ENCODE measurements at regions of chr12 and their contacts with region 1.

Region 1: GRCh38 chr12:116955382-116956021 is 44.8 kb downstream of the FBXW8 start:
- DNase-seq: no peak
- ATAC-seq: peak; percentile 37; the same call in 1 of the 3 replicates
- H3K4me3 ChIP-seq: no peak overlapping the region
- H3K27ac ChIP-seq: no peak overlapping the region
- H3K4me1 ChIP-seq: peaks cover 11% of the 10 kb centered on the region
- H3K27me3 ChIP-seq: no peaks in the 10 kb centered on the region
- CTCF ChIP-seq: peak; percentile 7 to 19 (median 17); a peak in 3 of 6 replicates
- EP300 ChIP-seq: no peak
- POLR2A ChIP-seq: no peak
- RAD21 ChIP-seq: peak; percentile 44; the same call in 1 of the 2 replicates

Region 2: DNA sequence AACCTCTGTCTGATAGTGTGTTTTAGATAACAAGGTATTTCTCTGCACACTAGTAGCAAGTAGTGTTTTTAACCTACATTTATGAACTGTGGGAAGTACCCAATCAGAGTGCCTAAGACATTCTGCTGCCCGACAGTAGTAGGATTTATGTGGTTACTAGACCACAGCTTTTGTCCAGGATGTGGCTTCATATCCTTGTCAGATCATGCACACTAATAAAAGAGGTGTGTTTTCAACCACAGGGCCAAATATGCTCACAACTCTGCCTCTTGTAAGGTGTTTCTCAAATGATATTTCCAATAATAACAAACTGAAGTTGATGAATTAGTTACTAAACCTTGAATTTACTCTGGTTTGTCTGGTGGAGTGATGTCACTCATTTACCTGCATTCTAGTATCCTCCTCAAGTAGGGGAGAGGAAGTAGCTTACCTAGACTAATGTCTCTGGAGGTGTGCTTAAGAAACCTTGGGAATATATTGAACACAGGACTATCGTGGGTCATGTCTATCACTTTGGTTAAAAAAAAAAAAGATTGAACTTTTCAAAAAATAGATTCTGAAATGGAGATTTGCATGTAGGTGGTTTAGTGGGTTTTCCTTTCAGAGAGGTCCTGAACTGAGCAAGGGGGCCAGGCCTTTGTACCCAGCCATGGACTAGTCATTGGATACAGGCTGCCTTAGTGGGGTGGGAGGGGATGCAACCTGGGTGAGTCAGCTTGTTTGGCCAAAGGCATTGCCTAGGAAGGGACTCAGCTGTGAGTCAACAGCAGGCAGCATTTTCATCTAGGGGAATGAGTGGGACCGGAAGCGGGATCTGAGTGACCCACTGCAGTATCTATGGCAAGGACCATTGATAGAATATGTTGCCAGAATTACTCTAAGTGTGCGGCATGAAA is 30.7 kb before region 1 on chr12:
- CTCF ChIA-PET with region 1: no interaction called
- POLR2A ChIA-PET with region 1: no interaction called
- RAD21 ChIA-PET with region 1: no interaction called
- SMC1A ChIA-PET with region 1: interaction called, 3 read pairs
- in situ Hi-C with region 1: no loop called
- intact Hi-C with region 1: loop called (anchors 1 kb)
- DNase-seq: peak; percentile 58
- ATAC-seq: peak; percentile 85
- H3K4me3 ChIP-seq: no peak overlapping the region
- H3K27ac ChIP-seq: no peak overlapping the region
- H3K4me1 ChIP-seq: peaks cover 34% of the 10 kb centered on the region
- H3K27me3 ChIP-seq: no peaks in the 10 kb centered on the region
- CTCF ChIP-seq: no peak
- EP300 ChIP-seq: no peak
- POLR2A ChIP-seq: no peak
- RAD21 ChIP-seq: no peak

Region 3: GRCh38 chr12:117236456-117237001 is 281.0 kb after region 1 on chr12:
- CTCF ChIA-PET with region 1: no interaction called
- POLR2A ChIA-PET with region 1: no interaction called
- RAD21 ChIA-PET with region 1: no interaction called
- SMC1A ChIA-PET with region 1: no interaction called
- in situ Hi-C with region 1: no loop called
- intact Hi-C with region 1: no loop called
- DNase-seq: no peak
- ATAC-seq: peak; percentile 89
- H3K4me3 ChIP-seq: no peak overlapping the region
- H3K27ac ChIP-seq: no peak overlapping the region
- H3K4me1 ChIP-seq: no peaks in the 10 kb centered on the region
- H3K27me3 ChIP-seq: peaks cover 3 to 6% of the 10 kb centered on the region in 2 experiments; a peak in 3 of 4 replicates
- CTCF ChIP-seq: peak; percentile 70 to 84 (median 78)
- EP300 ChIP-seq: no peak
- POLR2A ChIP-seq: no peak
- RAD21 ChIP-seq: peak; percentile 60